Psoas muscle (tissue), 8 donors: ENCODE measurements at regions of chr12 and their contacts with region 1.

Region 1: DNA sequence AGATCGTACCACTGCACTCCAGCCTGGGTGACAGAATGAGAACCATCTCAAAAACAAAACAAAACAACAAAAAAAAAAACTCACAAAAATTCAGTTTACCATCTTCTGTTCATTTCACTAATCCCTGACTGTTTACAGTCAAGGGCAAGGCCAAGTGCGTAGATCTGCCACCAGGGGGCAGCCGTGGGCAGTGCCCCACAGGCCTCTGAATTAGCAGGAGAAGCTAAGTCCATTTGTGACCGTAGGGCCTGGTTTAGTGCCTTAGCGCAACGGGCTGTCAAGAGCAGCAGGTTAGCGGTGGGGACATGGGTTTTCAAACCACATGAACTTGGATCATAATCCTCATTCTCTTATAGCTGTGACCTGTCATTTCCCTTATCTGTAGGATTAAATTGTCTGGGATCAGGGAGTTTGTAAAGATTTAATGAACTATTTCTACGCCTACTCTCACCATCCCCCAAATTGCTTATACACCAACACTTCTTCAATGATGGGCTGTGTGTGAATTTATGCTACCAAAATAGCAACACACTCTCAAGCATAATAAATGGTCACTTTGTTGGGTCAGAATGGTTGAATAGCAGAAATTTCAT is 49.0 kb downstream of the KCTD10 start:
- DNase-seq: peak; percentile 79 to 87
- ATAC-seq: peak; percentile 80 to 94 (median 92)
- H3K4me3 ChIP-seq: no peak overlapping the region
- H3K27ac ChIP-seq: no peak overlapping the region
- H3K4me1 ChIP-seq: peaks cover 6% of the 10 kb centered on the region
- H3K27me3 ChIP-seq: peaks cover 0 to 3% (median 0%) of the 10 kb centered on the region in 3 donors
- CTCF ChIP-seq: peak; percentile 98

Region 2: DNA sequence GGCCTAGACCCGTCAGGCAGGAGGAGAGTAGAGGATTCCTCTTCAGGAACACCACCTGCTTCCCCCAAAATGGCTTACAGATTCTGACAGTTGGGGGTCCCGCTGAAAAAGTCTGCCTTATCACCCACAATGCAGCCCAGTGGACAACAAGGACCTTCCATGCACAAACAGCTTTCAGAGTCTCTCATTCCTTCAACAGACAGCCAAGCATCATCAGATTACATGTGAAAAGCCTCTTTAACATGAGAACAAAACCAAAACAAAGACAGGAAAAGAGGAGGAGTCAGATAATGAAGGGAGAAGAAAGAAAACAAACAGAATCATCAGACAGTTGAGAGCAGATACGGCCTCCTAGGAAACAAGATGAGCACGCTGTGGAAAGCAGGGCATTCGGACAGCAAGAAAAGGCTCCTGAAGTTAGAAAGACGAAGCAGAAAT is 30.7 kb after region 1 on chr12:
- intact Hi-C with region 1: loop called in 1 of 2 experiments (anchors 2 kb)
- DNase-seq: no peak
- ATAC-seq: no peak
- H3K4me3 ChIP-seq: no peak overlapping the region
- H3K27ac ChIP-seq: no peak overlapping the region
- H3K4me1 ChIP-seq: peaks cover 35% of the 10 kb centered on the region
- H3K27me3 ChIP-seq: no peaks in the 10 kb centered on the region
- CTCF ChIP-seq: no peak

Region 3: GRCh38 chr12:109477185-109477962 is 49.2 kb after region 1 on chr12 and contains the starts of genes KCTD10 and UBE3B:
- intact Hi-C with region 1: loop called in 1 of 2 experiments (anchors 5 kb)
- DNase-seq: peak; percentile 90 to 94
- ATAC-seq: peak; percentile 98 to 99 (median 99)
- H3K4me3 ChIP-seq: peak within 1 kb of the TSS; percentile 95
- H3K27ac ChIP-seq: peak within 1 kb of the TSS; percentile 97
- H3K4me1 ChIP-seq: peaks cover 31% of the 10 kb centered on the region
- H3K27me3 ChIP-seq: no peaks in the 10 kb centered on the region
- CTCF ChIP-seq: no peak
- total RNA-seq, gene KCTD10: 13.0 to 21.8 (median 17.9) TPM
- total RNA-seq, gene UBE3B: 41.7 to 50.8 (median 46.3) TPM

Region 4: GRCh38 chr12:109612975-109613502 is 184.9 kb after region 1 on chr12:
- intact Hi-C with region 1: loop called in 1 of 2 experiments (anchors 10 kb)
- DNase-seq: no peak
- ATAC-seq: peak in 1 of 4 donors; percentile 26
- H3K4me3 ChIP-seq: no peak overlapping the region
- H3K27ac ChIP-seq: no peak overlapping the region
- H3K4me1 ChIP-seq: no peaks in the 10 kb centered on the region
- H3K27me3 ChIP-seq: peaks cover 0 to 18% (median 0%) of the 10 kb centered on the region in 3 donors
- CTCF ChIP-seq: no peak